ENCODE measurements at regions of chr6 and their contacts with region 1.

Region 1: GRCh38 chr6:45922728-45923351 is 92.8 kb downstream of the CLIC5 start:
- DNase-seq: peak; percentile 55
- H3K4me3 Mint-ChIP-seq: peak overlapping the region; percentile 43
- H3K27ac Mint-ChIP-seq: peak overlapping the region; percentile 82
- H3K4me1 Mint-ChIP-seq: peaks cover 57% of the 10 kb centered on the region
- H3K27me3 Mint-ChIP-seq: peaks cover 4% of the 10 kb centered on the region

Region 2: GRCh38 chr6:44655412-44656342 is 1267.2 kb before region 1 on chr6:
- intact Hi-C with region 1: loop called (anchors 1 kb)
- DNase-seq: peak; percentile 47
- H3K4me3 Mint-ChIP-seq: no peak overlapping the region
- H3K27ac Mint-ChIP-seq: peak overlapping the region; percentile 8
- H3K4me1 Mint-ChIP-seq: peaks cover 8% of the 10 kb centered on the region
- H3K27me3 Mint-ChIP-seq: peaks cover 4% of the 10 kb centered on the region

Region 3: DNA sequence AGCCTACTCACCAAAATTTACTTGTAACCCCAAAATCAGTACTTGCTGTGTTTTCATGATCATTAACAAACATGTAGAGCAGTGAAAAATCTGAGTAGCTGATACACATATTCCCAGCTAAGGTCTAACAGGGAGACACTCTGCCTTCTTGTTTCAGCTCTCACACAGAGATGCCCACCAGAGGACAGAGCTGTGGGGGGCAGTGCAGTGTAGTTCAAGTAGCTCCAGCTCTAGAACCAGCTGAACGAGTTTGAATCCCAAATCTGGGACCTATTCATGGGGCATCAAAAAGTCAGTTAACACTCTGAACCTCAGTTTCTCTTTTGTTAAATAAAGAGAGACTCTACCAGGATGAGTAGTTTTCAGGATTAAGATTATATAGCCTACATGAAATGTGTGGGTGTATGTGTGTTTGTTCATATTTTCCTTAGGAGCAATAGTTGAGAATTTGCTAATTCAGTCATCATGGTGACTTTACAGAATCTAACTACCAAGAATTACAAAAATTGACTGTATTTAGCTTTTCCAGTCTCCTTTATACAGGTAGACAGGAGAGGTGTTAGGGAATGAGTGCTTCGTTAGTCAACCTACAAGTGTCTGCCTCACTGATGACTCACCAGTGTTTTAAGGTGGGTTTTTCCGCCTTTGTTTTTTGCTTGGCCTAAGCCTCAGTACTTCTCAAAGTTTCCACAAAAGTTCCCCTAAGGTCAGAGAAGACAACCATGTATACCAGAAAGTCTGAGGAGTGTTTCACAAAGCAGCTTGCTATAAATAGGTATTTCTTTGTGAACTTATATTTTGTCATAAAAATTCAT is 758.7 kb before region 1 on chr6:
- intact Hi-C with region 1: loop called (anchors 1 kb)
- DNase-seq: peak; percentile 31
- H3K4me3 Mint-ChIP-seq: peak overlapping the region; percentile 35
- H3K27ac Mint-ChIP-seq: peak overlapping the region; percentile 89
- H3K4me1 Mint-ChIP-seq: peaks cover 62% of the 10 kb centered on the region
- H3K27me3 Mint-ChIP-seq: no peaks in the 10 kb centered on the region

Region 4: GRCh38 chr6:45436544-45437438 is 486.0 kb before region 1 on chr6:
- intact Hi-C with region 1: loop called (anchors 5 kb)
- DNase-seq: no peak
- H3K4me3 Mint-ChIP-seq: peak overlapping the region; percentile 70
- H3K27ac Mint-ChIP-seq: peak overlapping the region; percentile 86
- H3K4me1 Mint-ChIP-seq: peaks cover 59% of the 10 kb centered on the region
- H3K27me3 Mint-ChIP-seq: no peaks in the 10 kb centered on the region

Region 5: GRCh38 chr6:45677381-45678284 is 245.2 kb before region 1 on chr6:
- intact Hi-C with region 1: loop called (anchors 1 kb)
- DNase-seq: peak; percentile 47
- H3K4me3 Mint-ChIP-seq: peak overlapping the region; percentile 75
- H3K27ac Mint-ChIP-seq: peak overlapping the region; percentile 33
- H3K4me1 Mint-ChIP-seq: peaks cover 37% of the 10 kb centered on the region
- H3K27me3 Mint-ChIP-seq: peaks cover 9% of the 10 kb centered on the region

Region 6: DNA sequence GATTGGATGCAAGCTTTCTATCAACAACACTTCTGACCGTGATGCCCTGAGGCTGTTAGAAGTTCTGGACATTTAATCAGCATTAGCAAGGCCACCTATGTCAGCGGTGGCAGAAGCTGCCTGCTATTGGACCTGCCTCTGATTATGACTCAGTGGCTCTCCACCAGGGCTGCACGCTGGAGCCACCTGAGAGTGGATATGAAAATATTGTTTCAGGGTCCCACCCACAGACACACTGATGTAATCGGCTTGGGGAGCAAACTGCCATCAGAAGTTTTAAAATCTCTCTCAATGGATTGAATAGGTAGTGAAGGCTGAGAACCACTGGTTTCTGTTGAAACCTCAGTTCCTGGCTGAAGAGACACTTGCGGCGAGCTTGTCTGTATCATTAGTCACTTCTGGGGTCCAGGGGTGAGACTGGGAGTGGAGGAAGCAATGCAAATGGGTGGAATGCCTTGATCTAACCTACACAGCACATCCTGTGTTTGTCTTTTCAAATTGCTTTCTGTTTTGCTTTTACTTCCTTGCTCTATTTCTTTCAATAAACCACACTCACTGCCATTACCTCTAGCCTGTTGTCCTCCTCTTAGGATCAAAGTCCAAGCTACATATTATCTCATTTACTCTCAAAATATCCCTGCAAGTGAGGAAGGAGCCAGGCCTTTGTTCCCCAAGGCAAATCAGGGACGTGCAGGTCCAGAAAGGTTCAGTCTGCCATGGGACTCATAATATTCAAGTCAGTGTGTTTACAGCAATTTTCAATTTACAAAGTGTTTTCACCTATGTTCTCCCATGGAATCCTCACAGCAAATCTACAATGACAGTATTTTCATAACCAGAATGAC is 88.6 kb after region 1 on chr6:
- intact Hi-C with region 1: loop called (anchors 1 kb)
- DNase-seq: peak; percentile 63
- H3K4me3 Mint-ChIP-seq: peak overlapping the region; percentile 47
- H3K27ac Mint-ChIP-seq: peak overlapping the region; percentile 74
- H3K4me1 Mint-ChIP-seq: peaks cover 55% of the 10 kb centered on the region
- H3K27me3 Mint-ChIP-seq: peaks cover 11% of the 10 kb centered on the region

Region 7: DNA sequence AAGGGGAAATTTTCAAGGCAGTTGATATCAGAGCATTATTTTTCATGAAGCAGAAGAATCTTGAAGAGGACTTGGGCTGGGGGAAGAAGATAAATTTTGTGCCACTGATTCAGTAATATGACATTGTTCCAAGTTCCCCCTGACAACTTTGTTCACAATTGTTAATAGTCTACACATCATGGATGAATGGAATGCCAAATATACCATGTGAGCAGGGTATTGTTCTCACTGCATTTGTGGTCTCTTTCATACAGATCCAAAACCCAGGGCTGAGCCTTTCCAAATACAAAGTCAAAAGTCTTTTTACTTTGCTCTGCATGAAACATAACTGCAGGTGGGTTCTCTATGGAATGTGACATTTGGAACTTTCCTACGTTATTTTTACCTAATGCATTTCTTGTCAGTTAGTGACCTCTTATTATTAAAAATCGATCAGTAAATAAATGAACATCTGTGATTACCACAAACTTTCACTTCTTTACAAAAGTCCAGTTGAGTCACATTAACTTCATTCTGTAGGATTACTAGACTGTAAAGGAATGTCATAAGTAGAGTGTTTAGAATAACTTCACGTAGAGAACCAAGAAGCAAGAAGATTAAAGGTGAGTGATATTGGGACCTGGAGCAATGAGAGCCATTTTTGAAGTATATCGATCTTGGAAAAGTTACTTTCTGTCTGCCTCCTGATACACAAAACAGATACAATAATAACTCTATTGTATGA is 467.5 kb after region 1 on chr6:
- intact Hi-C with region 1: no loop called
- DNase-seq: no peak
- H3K4me3 Mint-ChIP-seq: no peak overlapping the region
- H3K27ac Mint-ChIP-seq: no peak overlapping the region
- H3K4me1 Mint-ChIP-seq: no peaks in the 10 kb centered on the region
- H3K27me3 Mint-ChIP-seq: peaks cover 8% of the 10 kb centered on the region